Activated B cell treated with CpG ODN at 0.5 μM for 24 hours (primary cell): ENCODE measurements at regions of chr4 and their contacts with region 1.

Region 1: DNA sequence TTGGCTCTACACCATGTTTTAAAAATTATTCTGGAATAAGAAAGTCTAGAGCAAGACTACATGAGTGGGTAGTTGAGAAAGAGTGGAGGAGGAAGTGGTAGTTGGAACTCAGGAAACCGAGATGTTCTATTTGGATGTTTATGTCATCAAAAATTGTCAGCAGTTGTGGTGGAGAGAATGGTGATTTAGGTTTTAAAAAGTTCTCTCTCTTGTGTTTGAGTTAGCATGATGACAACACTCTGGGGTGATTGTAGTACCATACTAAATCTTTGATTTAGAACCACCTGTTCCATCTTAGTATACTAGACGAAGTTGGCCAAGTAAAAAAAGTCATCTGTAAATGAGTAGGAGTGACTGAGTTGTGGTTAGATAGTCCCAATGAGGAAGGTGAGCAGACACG is 40.7 kb downstream of the KLHL2 start:
- DNase-seq: no peak
- ATAC-seq: no peak
- H3K4me3 Mint-ChIP-seq: no peak overlapping the region
- H3K27ac Mint-ChIP-seq: no peak overlapping the region
- H3K4me1 Mint-ChIP-seq: peaks cover 2% of the 10 kb centered on the region
- H3K27me3 Mint-ChIP-seq: no peaks in the 10 kb centered on the region
- CTCF ChIP-seq: no peak

Region 2: DNA sequence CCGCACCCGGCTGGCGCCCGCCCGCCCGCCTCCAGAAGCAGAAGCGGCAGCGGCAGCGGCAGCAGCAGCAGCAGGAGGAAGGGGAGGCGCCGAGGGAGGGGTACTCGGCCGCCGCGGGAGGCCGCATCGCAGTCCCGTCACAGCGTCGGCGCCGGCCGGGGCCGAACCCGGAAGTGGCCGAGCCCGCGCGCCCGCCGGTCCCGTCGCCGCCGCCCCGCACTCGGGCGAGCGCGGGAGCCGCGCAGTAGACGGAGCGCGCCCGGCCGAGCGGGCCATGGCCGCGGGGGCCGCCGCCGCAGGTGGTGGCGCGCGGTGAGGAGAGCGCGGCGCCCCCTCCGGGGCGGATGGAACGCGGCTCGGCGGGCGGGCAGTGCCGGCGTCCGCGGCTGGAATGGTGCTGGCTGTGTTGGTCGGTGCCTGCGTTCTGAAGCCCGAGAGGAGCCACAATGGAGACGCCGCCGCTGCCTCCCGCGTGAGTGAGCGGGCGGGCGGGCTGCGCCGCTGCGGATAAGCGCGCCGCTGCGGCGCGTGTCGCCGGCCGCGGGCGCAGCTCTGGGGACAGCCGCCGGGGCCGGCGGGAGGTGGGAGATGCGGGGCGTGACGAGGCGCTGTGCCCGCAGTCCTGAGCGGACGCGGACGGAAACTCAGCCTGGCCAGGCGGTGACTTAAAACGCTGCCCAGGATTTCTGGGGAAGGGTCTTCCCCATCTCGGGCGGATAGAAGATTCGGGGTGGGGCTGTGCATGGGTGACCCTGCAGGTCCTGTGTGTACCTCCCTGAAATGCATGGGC is 40.5 kb before region 1 on chr4 and contains the start of gene KLHL2:
- CTCF ChIA-PET with region 1: no interaction called
- POLR2A ChIA-PET with region 1: no interaction called
- intact Hi-C with region 1: loop called (anchors 10 kb)
- DNase-seq: peak; percentile 76
- ATAC-seq: peak; percentile 90
- H3K4me3 Mint-ChIP-seq: peak within 1 kb of the TSS; percentile 94
- H3K27ac Mint-ChIP-seq: peak within 1 kb of the TSS; percentile 91
- H3K4me1 Mint-ChIP-seq: peaks cover 73% of the 10 kb centered on the region
- H3K27me3 Mint-ChIP-seq: no peaks in the 10 kb centered on the region
- CTCF ChIP-seq: no peak
- total RNA-seq, gene KLHL2: 21.5 and 21.9 TPM in 2 replicates

Region 3: DNA sequence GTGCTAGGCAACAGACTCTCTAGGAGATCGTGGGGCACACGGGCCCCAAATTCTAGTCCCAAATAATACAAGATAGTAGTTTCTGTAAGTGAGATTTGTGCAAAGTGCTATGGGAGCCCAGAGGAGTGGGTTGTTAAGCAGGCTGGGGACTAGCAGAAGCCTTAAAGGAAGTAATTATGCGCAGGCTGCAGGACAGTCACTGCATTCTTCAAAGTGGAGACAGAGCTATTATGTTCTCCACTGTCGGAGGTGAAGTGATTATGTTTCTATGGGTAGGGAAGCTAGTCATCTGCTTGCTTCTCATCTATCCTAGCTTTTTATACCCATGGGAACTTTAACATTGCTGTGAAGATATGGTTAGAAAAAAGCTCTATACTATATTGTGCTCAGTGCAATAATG is 284.9 kb after region 1 on chr4:
- CTCF ChIA-PET with region 1: no interaction called
- POLR2A ChIA-PET with region 1: no interaction called
- intact Hi-C with region 1: no loop called
- DNase-seq: no peak
- ATAC-seq: no peak
- H3K4me3 Mint-ChIP-seq: no peak overlapping the region
- H3K27ac Mint-ChIP-seq: no peak overlapping the region
- H3K4me1 Mint-ChIP-seq: no peaks in the 10 kb centered on the region
- H3K27me3 Mint-ChIP-seq: peaks cover 4% of the 10 kb centered on the region
- CTCF ChIP-seq: no peak